ENCODE measurements at regions of chr6 and their contacts with region 1.

Region 1: DNA sequence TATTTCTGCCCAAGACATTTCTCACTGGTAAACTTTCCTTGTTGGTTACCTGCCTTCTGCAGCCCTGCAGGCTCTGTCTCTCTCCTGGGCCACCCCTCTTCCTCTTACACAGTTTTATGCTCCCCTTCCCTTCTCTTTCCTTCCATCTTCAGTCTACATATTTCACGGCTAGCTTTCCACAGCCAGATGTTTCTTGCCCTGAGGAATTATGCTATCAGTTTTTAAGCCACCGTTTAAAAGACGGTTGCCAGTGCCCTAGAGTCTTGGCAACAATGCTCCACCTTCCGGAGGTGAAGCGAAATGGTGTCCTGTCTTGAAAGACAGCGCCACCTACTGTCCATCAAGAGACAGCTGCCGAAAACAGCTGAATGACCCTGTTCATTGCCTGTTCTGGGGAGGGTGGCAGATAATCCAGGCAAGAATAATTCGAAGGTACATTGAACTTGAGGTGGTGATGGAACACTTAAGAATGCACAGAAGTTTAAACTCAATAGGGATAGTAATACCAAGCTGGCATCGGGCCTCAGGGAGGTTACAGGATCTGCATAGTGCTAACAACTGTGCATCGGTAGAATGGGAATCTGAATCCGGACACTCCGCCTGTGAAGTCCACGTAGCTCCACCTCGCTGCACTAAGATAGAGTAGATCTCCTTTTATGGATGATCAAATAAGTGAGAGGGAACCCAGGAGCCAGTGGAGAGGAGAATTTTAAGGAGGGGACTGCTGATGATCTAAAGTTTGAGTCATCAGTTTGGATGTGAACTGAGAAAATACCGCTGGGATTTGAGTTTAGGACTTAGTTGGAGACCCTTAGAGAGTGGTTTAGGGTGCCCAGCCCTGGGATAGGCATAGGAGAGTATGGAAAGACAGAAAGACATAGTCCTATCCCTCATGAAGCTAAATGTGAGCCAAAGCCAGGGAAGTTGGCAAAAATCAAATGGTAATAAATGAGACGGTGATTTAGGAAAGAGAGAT is 4.8 kb upstream of the TRIM40 start:
- DNase-seq: peak; percentile 72
- H3K4me3 ChIP-seq: no peak overlapping the region
- H3K27ac ChIP-seq: no peak overlapping the region
- H3K4me1 ChIP-seq: peaks cover 3% of the 10 kb centered on the region
- H3K27me3 ChIP-seq: peaks cover 7% of the 10 kb centered on the region
- CTCF ChIP-seq: peak; percentile 100

Region 2: DNA sequence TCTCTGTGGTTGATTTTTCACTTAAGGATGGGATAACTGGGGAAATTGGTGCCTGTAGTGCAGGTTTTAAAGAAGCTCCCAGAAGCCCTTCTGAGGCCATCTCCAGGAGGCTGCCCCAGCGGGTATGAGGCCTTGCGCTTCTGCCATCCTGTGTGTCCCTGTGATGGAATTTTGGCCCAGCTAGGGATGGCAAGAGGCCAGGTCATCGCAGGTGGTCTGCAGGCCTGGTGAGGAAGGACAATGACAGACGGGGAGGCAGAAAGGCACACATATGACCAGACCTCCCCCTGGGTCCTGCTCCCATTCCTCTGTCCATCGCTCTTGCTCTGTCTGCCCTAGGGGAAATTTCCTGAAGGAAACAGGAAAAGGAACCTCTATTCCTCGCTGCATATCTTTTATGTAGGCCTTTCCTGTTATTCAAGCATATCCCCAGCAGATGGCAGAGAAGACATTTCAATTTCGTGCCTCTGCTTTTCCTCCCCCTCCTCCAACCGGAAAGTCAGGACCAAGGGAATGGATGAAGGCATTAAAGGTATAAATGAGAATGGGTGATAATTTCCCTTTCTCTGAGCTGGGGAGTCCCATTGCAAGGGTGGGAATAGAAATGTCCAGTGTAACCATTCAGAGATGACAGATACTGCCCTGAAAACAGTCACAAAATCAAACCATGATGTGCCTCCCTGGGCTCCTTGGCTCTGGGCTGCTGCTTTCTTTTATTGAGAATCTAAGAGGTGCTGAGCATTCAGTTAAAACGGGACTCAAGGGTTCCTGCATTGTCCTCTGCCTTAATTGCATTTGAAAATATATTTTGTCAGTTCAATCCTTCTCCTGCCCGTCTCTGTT is 425.6 kb before region 1 on chr6:
- CTCF ChIA-PET with region 1: no interaction called
- dilution Hi-C with region 1: no loop called
- in situ Hi-C with region 1: no loop called
- intact Hi-C with region 1: loop called (anchors 10 kb)
- DNase-seq: peak; percentile 32
- H3K4me3 ChIP-seq: no peak overlapping the region
- H3K27ac ChIP-seq: no peak overlapping the region
- H3K4me1 ChIP-seq: no peaks in the 10 kb centered on the region
- H3K27me3 ChIP-seq: no peaks in the 10 kb centered on the region
- CTCF ChIP-seq: peak; percentile 41 to 53

Region 3: DNA sequence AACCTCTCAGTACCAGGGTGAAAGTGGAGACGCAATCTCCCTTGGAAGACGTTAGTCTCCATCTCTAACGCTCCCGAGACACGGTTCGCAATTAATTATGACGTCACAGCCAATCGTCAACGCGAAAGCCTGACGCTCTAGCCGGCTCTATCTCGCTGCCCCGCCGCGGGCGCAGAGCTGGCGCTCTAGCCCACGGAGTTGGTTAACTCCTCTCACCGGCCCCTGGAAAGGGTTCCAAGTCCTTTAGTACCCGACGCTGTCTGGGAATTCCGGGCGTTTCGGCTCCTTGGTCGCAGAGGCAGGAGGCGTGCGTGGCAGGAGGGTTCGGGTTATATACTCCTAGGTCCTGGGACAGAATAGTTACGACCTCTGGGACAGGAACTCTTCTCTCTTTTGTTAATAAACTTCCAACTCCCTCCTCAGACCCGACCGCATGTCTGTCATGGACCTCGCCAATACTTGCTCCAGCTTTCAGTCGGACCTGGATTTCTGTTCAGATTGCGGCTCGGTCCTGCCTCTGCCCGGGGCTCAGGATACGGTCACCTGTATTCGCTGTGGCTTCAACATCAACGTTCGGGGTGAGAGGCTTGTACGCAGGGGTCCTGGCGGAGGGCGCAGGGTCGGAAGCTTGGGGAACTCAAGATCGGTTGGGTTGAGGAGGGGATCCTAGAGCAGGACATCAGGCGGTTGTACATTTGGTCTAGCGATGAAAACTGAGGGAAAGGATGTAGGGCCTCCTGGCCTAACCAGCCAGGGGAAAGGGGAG is 69.9 kb before region 1 on chr6 and contains the start of gene POLR1H:
- CTCF ChIA-PET with region 1: no interaction called
- dilution Hi-C with region 1: no loop called
- in situ Hi-C with region 1: no loop called
- intact Hi-C with region 1: loop called (anchors 1 kb)
- DNase-seq: peak; percentile 95
- H3K4me3 ChIP-seq: peak within 1 kb of the TSS; percentile 90 to 94 (median 91)
- H3K27ac ChIP-seq: peak within 1 kb of the TSS; percentile 87
- H3K4me1 ChIP-seq: peaks cover 27% of the 10 kb centered on the region
- H3K27me3 ChIP-seq: no peaks in the 10 kb centered on the region
- CTCF ChIP-seq: no peak
- total RNA-seq, gene POLR1H: 18.8 to 33.3 TPM

Region 4: DNA sequence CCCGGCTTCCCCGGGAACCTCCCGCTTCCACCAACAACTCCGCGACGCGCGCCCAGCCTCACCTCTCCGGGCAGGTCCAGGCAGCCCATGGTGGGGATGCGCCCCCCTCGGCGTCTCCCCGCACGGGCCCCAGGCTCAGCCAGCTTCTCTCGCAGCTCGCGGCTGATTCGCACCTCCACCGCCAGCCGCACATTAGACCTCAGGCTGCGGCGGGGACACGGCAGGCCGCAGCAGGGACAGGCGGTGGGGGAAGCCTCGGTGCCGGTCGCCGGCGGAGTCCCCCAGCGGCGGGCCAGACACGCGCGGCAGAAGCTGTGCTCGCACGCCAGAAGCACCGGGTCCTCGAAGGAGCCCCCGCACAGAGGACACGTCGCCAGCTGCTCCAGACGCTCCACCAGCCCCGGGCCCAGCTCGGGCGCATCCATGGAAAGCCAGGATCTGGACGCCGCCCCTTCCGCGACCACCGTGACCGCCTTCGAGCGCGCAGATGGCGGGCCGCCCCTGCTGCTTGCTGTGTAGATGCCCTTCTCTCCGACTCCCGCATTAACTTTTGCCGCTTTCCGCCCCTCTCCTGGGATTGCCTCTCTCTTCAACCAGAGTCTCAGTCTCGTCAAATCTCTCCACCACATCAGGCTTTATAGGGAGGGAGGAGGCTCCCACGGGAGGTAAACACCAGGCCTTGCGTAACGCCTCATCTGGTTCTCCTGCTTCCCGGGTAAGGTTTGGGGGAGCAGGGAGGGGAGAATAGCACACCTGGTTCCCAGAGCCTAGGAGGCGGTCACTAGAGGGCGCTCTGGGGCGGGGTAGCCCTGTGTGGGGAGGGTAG is 55.8 kb before region 1 on chr6 and contains the start of gene RNF39:
- CTCF ChIA-PET with region 1: no interaction called
- dilution Hi-C with region 1: loop called (anchors 5 kb)
- in situ Hi-C with region 1: no loop called
- intact Hi-C with region 1: loop called (anchors 2 kb)
- DNase-seq: peak; percentile 79
- H3K4me3 ChIP-seq: peak within 1 kb of the TSS; percentile 74 to 77 (median 77)
- H3K27ac ChIP-seq: peak within 1 kb of the TSS; percentile 62
- H3K4me1 ChIP-seq: peaks cover 28% of the 10 kb centered on the region
- H3K27me3 ChIP-seq: peaks cover 9% of the 10 kb centered on the region
- CTCF ChIP-seq: peak in 1 of 2 donors; percentile 63
- total RNA-seq, gene RNF39: 2.5 to 5.4 TPM

Region 5: DNA sequence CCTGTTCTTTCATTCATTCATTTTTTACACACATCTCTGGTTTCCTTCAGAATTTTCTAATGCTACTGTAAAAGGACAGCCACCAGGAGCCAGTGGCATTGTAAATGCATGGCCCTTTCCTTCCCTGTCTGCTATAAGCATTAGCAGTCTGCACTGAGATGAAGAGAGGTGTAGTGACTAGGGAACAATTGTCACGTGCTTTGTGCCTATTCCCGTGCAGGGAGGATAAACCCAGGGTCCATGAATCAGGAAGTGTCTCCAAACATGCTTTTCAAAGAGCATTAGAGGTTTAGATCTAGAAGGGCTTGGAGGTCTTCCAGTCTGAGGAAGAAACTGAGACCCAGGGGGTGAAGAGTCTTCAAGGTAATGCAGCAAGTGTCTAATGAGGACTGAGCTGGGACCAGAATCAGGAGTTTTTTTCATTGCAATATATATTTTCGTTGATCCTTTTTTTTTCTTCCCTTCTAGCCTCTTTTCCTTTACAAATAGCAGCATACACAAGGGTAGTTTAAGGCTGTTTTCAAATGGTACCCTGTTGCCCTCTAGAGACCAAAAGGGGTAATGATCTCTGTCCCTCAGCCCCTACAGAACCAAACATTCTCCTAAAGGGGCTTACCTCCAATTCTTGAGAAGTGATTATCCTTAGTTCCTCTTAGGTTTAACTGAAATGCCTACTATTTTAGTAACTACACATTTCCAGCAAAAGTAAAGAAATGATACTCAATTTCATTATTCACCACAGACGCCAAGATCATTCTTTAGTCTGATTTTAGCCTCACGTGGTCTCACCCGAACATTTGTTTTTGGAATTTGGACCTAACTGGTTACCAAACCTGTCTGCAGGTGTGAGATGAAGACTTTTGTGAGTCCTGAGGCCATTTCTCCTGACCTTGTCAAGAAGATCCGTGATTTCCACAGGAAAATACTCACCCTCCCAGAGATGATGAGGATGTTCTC is 38.8 kb after region 1 on chr6:
- CTCF ChIA-PET with region 1: no interaction called
- dilution Hi-C with region 1: loop called (anchors 5 kb)
- in situ Hi-C with region 1: no loop called
- intact Hi-C with region 1: loop called (anchors 1 kb)
- DNase-seq: peak; percentile 41
- H3K4me3 ChIP-seq: no peak overlapping the region
- H3K27ac ChIP-seq: no peak overlapping the region
- H3K4me1 ChIP-seq: no peaks in the 10 kb centered on the region
- H3K27me3 ChIP-seq: peaks cover 14% of the 10 kb centered on the region
- CTCF ChIP-seq: peak; percentile 85 to 90

Measured in mammary epithelial cell (primary cell).